ENCODE measurements at regions of chr4 and their contacts with region 1.

Region 1: DNA sequence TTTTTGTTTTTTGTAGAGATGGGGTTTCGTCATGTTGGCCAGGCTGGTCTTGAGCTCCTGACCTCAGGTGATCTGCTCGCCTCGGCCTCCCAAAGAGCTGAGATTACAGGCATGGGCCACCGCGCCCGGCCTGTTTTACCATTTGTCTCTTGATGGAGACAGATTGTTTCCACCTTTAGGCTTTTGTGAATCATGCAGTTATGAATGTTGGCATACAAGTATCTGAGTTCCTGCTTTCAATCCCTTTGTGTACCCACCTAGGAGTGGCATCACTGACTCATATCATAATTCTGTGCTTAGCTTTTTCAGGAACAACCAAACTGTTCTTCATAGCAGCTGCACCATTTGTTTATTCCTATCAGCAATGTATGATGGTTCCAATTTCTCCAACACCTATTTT is 20.2 kb upstream of the MGST2 start:
- DNase-seq: no peak
- H3K4me3 ChIP-seq: no peak overlapping the region
- H3K27ac ChIP-seq: no peak overlapping the region
- H3K4me1 ChIP-seq: no peaks in the 10 kb centered on the region
- H3K27me3 ChIP-seq: no peaks in the 10 kb centered on the region
- CTCF ChIP-seq: no peak
- EP300 ChIP-seq: no peak
- POLR2A ChIP-seq: no peak

Region 2: DNA sequence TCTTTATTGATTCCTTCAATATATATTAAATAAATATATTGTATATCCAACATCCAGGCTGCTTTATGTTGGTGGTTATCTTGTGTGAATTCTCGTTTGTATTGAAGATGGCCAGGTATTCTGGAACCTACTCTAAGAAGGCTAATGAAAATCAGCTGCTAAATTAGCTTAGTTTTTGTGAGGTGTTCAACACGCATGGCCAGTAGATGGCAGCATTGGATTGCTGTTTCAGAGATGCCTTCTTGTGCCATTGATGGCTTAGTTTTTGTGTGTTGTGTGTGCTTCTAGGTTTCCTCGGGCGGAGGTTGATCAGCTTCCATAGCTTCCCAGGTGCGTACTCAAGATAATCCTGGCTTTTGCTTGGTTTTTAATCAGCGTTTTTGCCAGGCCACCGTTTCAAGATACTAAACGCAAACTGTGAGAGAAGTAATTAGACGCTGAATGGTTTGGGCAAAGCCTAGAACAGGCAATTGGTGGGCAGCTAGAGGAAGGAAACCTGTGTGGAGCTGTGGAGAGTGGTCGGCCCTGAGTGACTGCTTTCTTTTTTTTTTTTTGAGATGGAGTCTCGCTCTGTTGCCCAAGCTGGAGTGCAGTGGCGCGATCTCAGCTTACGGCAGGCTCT is 614.7 kb before region 1 on chr4:
- in situ Hi-C with region 1: no loop called
- intact Hi-C with region 1: loop called (anchors 5 kb)
- DNase-seq: peak; percentile 76
- H3K4me3 ChIP-seq: no peak overlapping the region
- H3K27ac ChIP-seq: no peak overlapping the region
- H3K4me1 ChIP-seq: peaks cover 0 to 8% (median 0%) of the 10 kb centered on the region in 4 donors
- H3K27me3 ChIP-seq: no peaks in the 10 kb centered on the region
- CTCF ChIP-seq: peak; percentile 77 to 82 (median 79)
- EP300 ChIP-seq: no peak
- POLR2A ChIP-seq: no peak

Region 3: DNA sequence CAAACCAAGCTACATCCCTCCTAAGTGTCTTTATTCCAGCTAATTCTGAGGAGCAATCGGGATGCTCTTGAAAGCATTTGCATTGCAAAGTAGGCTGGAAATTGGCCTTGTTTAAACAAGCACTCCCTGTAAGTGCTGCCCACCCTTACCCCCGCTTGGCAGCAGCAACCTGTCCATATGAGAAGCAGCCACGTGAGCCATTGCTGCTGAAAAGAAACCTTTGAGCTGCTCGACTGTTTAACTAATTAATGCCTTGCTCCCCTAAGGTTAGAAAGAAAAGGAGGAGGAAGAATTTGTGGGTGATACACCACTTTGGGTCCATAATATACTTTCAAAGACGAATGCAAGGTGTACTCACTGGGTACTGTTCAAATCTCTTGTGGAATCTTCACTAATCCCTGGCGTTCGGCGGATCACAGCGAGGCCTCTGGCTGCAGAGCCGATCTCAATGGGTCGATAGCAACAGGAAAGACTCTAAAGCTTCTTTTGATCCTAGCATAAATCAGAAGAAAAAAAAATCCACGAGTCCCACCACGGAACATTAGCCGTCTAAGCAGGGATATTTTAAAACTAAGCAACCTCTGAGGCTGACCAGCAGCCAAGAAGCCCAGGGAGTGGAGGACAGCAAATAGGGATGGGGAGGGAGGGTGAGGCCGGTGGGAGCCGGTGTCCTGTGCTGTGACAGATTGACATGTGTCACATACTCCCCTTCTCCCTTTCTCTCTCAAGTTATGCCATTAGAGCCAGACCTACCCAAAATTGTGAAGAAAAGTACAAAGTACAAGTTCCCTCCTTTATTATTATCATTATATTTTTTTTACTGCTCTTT is 17.1 kb before region 1 on chr4:
- in situ Hi-C with region 1: no loop called
- intact Hi-C with region 1: loop called (anchors 1 kb)
- DNase-seq: peak; percentile 60
- H3K4me3 ChIP-seq: no peak overlapping the region
- H3K27ac ChIP-seq: peak overlapping the region in 1 of 4 donors; percentile 44
- H3K4me1 ChIP-seq: no peaks in the 10 kb centered on the region
- H3K27me3 ChIP-seq: no peaks in the 10 kb centered on the region
- CTCF ChIP-seq: no peak
- EP300 ChIP-seq: no peak
- POLR2A ChIP-seq: no peak